ENCODE measurements at regions of chr15 and their contacts with region 1.

Region 1: DNA sequence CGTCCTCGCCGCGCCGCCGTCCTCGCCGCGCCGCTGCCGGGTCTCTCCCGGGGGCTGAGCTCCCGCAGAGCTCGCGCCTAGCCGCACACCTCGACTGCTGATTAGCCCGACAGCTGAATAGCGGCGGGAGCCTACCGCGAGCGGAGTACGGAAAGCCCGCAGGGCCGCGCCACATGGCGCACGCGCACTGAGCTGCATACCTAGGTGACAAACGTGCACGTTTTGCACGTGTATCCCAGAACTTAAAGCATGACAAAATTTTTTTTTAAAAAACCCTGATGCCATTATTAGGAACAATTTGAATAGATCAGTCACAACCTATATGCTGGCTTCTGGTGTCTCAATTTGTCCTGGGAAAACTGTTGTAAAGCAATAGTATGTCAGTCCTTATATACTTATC is at the start of gene GOLGA8A:
- DNase-seq: peak; percentile 74
- H3K4me3 Mint-ChIP-seq: peak within 1 kb of the TSS; percentile 81
- H3K27ac Mint-ChIP-seq: peak within 1 kb of the TSS; percentile 69
- H3K4me1 Mint-ChIP-seq: peaks cover 4% of the 10 kb centered on the region
- H3K27me3 Mint-ChIP-seq: no peaks in the 10 kb centered on the region
- total RNA-seq, gene GOLGA8A: 65.3 to 72.9 TPM

Region 2: GRCh38 chr15:34182942-34183341 is 254.7 kb before region 1 on chr15:
- CTCF ChIA-PET with region 1: no interaction called
- POLR2A ChIA-PET with region 1: no interaction called
- intact Hi-C with region 1: no loop called
- DNase-seq: no peak
- H3K4me3 Mint-ChIP-seq: no peak overlapping the region
- H3K27ac Mint-ChIP-seq: no peak overlapping the region
- H3K4me1 Mint-ChIP-seq: peaks cover 5% of the 10 kb centered on the region
- H3K27me3 Mint-ChIP-seq: no peaks in the 10 kb centered on the region

Region 3: DNA sequence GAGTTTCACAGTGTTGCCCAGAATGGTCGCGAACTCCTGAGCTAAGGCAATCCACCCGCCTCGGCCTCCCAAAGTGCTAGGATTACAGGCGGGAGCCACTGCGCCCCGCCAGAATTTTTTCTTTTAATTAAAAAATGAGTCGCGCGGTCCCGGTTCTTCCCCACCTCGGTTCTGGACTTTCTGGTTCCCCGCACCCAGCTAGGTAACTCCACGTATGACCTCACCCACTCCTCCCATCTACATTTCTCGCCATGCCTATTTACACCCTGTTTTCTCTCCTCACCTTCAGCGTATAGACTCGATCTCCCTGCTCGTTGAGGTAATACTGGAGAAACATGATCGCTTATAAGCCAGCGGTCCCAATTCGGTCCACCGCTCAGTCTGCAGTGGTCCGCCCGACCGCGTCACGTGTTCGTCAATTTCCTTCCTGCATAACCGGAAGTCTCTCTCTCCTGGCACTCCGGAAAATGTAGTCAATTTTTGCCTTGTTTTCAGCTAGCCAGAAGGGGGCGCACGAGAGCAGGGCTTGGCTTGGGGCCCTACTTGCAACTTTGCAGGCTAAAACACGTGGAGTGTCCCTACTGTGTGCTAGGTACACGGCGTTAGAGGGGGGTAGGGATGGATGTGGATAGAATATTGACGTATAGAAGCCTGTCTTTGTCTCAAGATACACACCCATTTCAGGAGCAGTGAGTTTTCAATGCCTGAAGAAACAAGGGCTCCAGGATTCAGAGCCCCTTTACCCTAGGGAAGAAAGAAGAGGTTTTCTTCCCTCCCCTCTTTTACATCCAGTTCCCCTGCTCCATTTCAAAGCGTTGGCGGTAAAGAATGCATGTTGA is 94.7 kb before region 1 on chr15 and contains the starts of genes NOP10 and NUTM1:
- CTCF ChIA-PET with region 1: interaction called, 4 read pairs
- POLR2A ChIA-PET with region 1: no interaction called
- intact Hi-C with region 1: loop called (anchors 5 kb)
- DNase-seq: peak; percentile 96
- H3K4me3 Mint-ChIP-seq: no peak within 1 kb of the TSS
- H3K27ac Mint-ChIP-seq: no peak within 1 kb of the TSS
- H3K4me1 Mint-ChIP-seq: peaks cover 29% of the 10 kb centered on the region
- H3K27me3 Mint-ChIP-seq: no peaks in the 10 kb centered on the region
- total RNA-seq, gene NOP10: 211 to 214 TPM
- total RNA-seq, gene NUTM1: not detected